ENCODE measurements at regions of chr17 and their contacts with region 1.

Region 1: GRCh38 chr17:63478791-63479494 is 2.1 kb downstream of the ACE start:
- DNase-seq: peak; percentile 92 to 99
- ATAC-seq: peak; percentile 84 to 95
- H3K4me3 ChIP-seq: no peak overlapping the region
- H3K27ac ChIP-seq: peak overlapping the region in 1 of 2 experiments; percentile 57; a peak in 3 of 6 replicates
- H3K4me1 ChIP-seq: peaks cover 13% of the 10 kb centered on the region
- CTCF ChIP-seq: peak; percentile 90
- EP300 ChIP-seq: no peak
- POLR2A ChIP-seq: no peak
- RAD21 ChIP-seq: peak; percentile 84 to 88

Region 2: DNA sequence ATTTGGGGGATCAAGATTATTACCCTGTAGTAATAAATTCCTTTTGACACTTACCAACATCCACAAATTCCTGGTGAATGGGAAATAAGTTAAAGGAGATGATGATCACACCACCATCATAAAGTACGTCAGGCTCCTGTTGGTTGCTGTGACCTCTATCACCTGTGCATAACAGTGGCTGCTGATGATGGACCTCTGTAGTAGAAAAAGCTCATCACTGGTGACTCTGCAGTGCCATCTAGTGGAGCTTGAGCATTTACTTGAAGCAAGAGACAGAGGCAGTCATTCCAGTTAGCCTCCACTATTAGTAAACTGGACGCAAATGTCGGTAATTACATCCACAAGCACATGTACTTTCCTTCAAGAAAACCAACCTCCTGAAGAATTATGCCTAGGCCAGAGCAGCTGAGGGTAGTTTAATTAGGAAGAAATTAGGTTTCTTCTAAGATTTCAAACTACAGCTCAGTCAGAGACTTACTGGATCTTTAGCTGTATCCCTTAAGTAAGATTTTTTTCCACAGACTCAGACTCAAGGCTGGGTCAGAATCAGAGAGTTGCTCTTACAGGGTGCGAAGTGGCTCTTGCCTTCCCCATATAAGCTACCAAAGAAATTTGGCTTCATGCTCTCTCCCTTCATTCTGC is 72.1 kb before region 1 on chr17:
- CTCF ChIA-PET with region 1: interaction called, 14 read pairs
- POLR2A ChIA-PET with region 1: no interaction called
- DNase-seq: peak; percentile 87 to 92
- ATAC-seq: peak; percentile 95 to 97
- H3K4me3 ChIP-seq: no peak overlapping the region
- H3K27ac ChIP-seq: no peak overlapping the region
- H3K4me1 ChIP-seq: no peaks in the 10 kb centered on the region
- CTCF ChIP-seq: peak; percentile 96
- EP300 ChIP-seq: no peak
- POLR2A ChIP-seq: no peak
- RAD21 ChIP-seq: peak; percentile 94 to 96

Region 3: DNA sequence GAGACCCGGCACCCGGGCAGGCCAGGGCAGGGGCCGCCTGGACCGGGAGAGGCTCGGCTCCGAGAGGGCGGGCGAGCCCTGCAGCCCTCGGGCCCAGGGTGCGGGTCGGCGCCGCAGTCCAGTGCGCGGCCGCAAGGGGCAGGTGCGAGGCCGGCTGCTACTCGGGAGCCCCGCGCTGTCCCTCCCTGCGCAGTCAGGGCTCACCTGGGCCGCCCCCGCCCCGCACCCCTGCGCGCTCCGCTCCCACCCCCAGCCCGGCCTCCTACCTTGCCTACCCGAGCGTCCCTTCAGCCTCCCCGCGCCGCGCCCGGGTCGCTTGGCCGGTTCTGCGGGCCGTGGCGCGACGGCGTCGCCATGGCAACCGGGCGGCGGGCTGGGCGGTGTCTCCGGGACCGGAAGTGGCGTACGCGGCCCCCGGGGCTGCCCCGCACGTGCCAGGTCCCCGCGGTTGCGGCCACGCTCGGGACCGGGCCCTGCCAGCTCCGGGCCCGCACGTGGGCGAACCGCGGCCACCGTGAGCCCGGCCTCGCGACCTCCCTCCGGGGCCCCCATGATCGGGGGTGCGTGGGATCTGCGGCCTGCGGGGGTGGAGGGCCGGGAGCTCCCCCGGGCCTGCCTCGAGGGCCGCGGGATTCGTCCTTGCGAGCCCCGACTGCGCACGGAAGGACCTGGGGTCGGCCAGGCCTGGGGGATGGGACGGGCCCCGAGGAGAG is 32.8 kb before region 1 on chr17 and contains the start of gene CYB561:
- CTCF ChIA-PET with region 1: interaction called, 347 read pairs
- POLR2A ChIA-PET with region 1: interaction called, 3 read pairs
- DNase-seq: peak; percentile 81 to 92
- ATAC-seq: peak; percentile 88 to 94
- H3K4me3 ChIP-seq: peak within 1 kb of the TSS; percentile 69
- H3K27ac ChIP-seq: peak within 1 kb of the TSS; percentile 94 to 98
- H3K4me1 ChIP-seq: peaks cover 15% of the 10 kb centered on the region
- CTCF ChIP-seq: peak; percentile 61
- EP300 ChIP-seq: no peak
- POLR2A ChIP-seq: peak; percentile 47
- RAD21 ChIP-seq: peak in 1 of 2 experiments; percentile 44; a peak in 3 of 5 replicates
- polyA plus RNA-seq, gene CYB561: 16.6 and 19.7 TPM in 2 replicates

Region 4: GRCh38 chr17:63490321-63490720 is 11.4 kb after region 1 on chr17:
- CTCF ChIA-PET with region 1: interaction called, 111 read pairs
- POLR2A ChIA-PET with region 1: no interaction called
- DNase-seq: no peak
- ATAC-seq: peak in 1 of 2 experiments; percentile 15; a peak in 2 of 6 replicates
- H3K4me3 ChIP-seq: no peak overlapping the region
- H3K27ac ChIP-seq: no peak overlapping the region; a peak in 1 of 6 replicates
- H3K4me1 ChIP-seq: no peaks in the 10 kb centered on the region
- CTCF ChIP-seq: no peak
- EP300 ChIP-seq: no peak
- POLR2A ChIP-seq: no peak
- RAD21 ChIP-seq: no peak

Region 5: GRCh38 chr17:63516910-63517824 is 38.2 kb after region 1 on chr17:
- CTCF ChIA-PET with region 1: interaction called, 14 read pairs
- POLR2A ChIA-PET with region 1: no interaction called
- DNase-seq: peak; percentile 40 to 55
- ATAC-seq: 0 out of 6 replicates have a peak, but pooled peaks of 1 of the 2 experiments have one; percentile 27
- H3K4me3 ChIP-seq: no peak overlapping the region
- H3K27ac ChIP-seq: no peak overlapping the region
- H3K4me1 ChIP-seq: peaks cover 11% of the 10 kb centered on the region
- CTCF ChIP-seq: no peak
- EP300 ChIP-seq: no peak
- POLR2A ChIP-seq: no peak
- RAD21 ChIP-seq: no peak

Region 6: GRCh38 chr17:63549946-63550807 is 71.2 kb after region 1 on chr17 and contains the start of gene DCAF7:
- CTCF ChIA-PET with region 1: interaction called, 18 read pairs
- POLR2A ChIA-PET with region 1: no interaction called
- DNase-seq: peak; percentile 100
- ATAC-seq: peak; percentile 93 to 96
- H3K4me3 ChIP-seq: peak within 1 kb of the TSS; percentile 99
- H3K27ac ChIP-seq: peak within 1 kb of the TSS; percentile 97
- H3K4me1 ChIP-seq: peaks cover 18% of the 10 kb centered on the region
- CTCF ChIP-seq: no peak
- EP300 ChIP-seq: no peak
- POLR2A ChIP-seq: peak; percentile 93
- RAD21 ChIP-seq: no peak
- polyA plus RNA-seq, gene DCAF7: 48.7 and 51.4 TPM in 2 replicates

Measured in A549 (cell line).